Adrenal gland (tissue), 19 donors: ENCODE measurements at regions of chr6 and their contacts with region 1.

Region 1: DNA sequence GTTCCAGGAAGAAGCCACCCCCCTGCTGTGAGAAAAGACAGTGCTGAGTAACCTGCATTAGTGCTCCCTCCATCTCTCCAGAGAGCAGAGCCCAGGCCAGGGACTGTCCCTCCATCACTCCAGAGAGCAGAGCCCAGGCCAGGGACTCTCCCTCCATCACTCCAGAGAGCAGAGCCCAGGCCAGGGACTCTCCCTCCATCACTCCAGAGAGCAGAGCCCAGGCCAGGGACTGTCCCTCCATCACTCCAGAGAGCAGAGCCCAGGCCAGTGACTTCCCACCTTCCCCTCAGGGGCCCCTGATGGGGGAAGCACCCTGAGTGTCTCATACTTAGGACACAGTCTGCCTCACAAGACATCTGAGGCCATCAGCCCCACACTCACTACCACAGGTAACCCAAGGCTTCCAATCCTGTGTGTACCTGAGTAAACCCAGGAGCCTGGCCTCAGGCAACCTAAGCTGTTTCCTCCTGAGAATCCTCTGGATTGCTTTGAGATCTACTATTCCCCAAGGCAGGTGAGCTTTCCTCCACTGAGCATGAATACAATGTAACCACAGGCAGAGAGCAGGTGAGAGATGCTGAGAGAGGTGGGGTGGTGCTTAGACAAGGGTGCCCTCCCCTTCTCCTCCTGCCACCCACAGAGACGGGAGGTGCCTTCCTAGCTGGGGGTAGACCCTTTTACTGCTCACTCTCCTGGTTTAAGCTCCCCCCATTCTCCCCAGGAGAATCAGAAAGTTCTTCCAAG is 4.9 kb downstream of the TBXT start:
- DNase-seq: no peak
- H3K4me3 ChIP-seq: no peak overlapping the region
- H3K27ac ChIP-seq: no peak overlapping the region
- H3K4me1 ChIP-seq: no peaks in the 10 kb centered on the region
- H3K27me3 ChIP-seq: peaks cover 39% of the 10 kb centered on the region
- CTCF ChIP-seq: no peak
- POLR2A ChIP-seq: no peak

Region 2: GRCh38 chr6:166221040-166221439 is 58.3 kb after region 1 on chr6:
- intact Hi-C with region 1: no loop called
- DNase-seq: no peak
- H3K4me3 ChIP-seq: no peak overlapping the region
- H3K27ac ChIP-seq: no peak overlapping the region
- H3K4me1 ChIP-seq: no peaks in the 10 kb centered on the region
- H3K27me3 ChIP-seq: peaks cover 7% of the 10 kb centered on the region
- CTCF ChIP-seq: no peak
- POLR2A ChIP-seq: no peak

Region 3: GRCh38 chr6:167849846-167850459 is 1687.2 kb after region 1 on chr6:
- intact Hi-C with region 1: loop called in 1 of 2 experiments (anchors 5 kb)
- DNase-seq: no peak
- H3K4me3 ChIP-seq: no peak overlapping the region
- H3K27ac ChIP-seq: peak overlapping the region in 1 of 5 donors; percentile 26
- H3K4me1 ChIP-seq: peaks cover 5 to 19% of the 10 kb centered on the region in 2 donors
- H3K27me3 ChIP-seq: no peaks in the 10 kb centered on the region
- CTCF ChIP-seq: no peak
- POLR2A ChIP-seq: no peak